PC-9 (cell line): ENCODE measurements at regions of chr10 and their contacts with region 1.

Region 1: GRCh38 chr10:98446661-98447221 is at the start of gene HPS1:
- DNase-seq: peak in 1 of 2 experiments; percentile 57
- H3K4me3 ChIP-seq: peak within 1 kb of the TSS; percentile 82
- H3K27ac ChIP-seq: peak within 1 kb of the TSS; percentile 47
- H3K4me1 ChIP-seq: 0 out of 2 replicates have a peak, but pooled peaks cover 4% of the 10 kb centered on the region
- H3K27me3 ChIP-seq: no peaks in the 10 kb centered on the region
- CTCF ChIP-seq: no peak
- total RNA-seq, gene HPS1: 43.2 and 47.0 TPM in 2 replicates

Region 2: DNA sequence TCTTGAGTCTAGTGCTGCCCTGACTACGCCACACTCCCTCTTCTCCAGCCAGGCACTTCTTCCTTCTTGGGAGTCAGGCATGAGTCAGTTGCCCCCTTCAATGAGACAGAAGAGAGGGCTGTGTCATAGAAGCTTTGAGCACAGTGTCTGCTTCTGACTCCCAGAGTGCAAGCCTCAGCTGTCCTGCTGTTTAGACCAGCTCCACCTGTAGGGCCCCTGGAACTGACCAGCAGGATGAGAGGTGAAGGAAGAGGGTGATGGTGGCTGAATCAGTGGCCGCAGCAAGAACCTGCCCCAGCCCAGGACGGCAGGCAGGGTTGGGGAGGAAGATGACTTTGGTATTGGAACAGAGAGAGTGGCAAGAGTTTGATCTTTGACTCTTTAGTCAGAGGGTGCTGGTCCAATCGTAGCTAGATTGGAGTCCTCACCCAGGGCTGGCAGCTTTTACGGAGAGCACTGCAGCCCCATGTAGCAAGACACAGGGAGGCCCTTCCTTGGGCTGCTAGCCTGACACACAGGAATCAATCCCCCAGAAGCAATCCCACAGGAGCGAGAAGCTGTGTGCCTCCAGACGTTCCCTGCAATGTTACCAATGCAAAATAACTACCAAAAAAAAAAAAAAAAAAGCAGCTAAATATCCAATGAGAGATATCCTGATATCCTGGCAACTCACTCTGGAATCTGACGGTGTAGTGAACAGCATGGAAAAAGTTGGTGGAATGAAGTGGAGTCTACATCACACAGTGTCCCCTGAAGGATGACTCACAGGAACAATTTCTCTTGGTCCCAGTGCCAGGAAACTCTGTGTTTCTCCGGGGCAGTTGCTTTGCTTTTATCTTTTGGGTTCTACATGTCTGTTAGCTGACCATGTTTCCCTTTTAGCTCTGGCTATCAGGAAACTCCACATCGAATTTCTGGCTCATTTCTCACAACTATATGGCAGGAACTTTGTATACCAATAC is 850.4 kb before region 1 on chr10:
- CTCF ChIA-PET with region 1: no interaction called
- POLR2A ChIA-PET with region 1: no interaction called
- intact Hi-C with region 1: no loop called
- DNase-seq: peak; percentile 32 to 46
- H3K4me3 ChIP-seq: no peak overlapping the region
- H3K27ac ChIP-seq: peak overlapping the region; percentile 67
- H3K4me1 ChIP-seq: peaks cover 28% of the 10 kb centered on the region
- H3K27me3 ChIP-seq: no peaks in the 10 kb centered on the region
- CTCF ChIP-seq: no peak

Region 3: DNA sequence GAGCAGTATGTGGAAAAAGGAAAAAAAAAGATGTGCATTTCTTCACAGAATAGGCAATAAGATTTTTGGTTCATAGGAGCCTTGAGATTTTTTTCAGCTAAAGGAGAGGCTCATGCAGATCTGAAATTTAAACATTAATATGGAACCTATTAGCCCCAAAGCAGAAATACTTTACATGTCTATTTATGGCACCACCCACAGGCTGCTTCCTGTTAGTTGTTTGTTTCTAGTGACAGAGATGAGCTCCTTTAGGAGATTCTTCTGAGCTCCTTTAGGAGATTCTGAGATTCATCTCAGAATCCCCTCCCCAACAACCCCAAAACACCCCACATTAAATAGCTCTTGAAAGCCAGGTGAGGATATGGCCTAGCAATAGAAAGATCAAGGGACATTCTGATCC is 27.9 kb after region 1 on chr10:
- CTCF ChIA-PET with region 1: no interaction called
- POLR2A ChIA-PET with region 1: no interaction called
- intact Hi-C with region 1: no loop called
- DNase-seq: no peak
- H3K4me3 ChIP-seq: no peak overlapping the region
- H3K27ac ChIP-seq: no peak overlapping the region
- H3K4me1 ChIP-seq: no peaks in the 10 kb centered on the region
- H3K27me3 ChIP-seq: no peaks in the 10 kb centered on the region
- CTCF ChIP-seq: no peak

Region 4: DNA sequence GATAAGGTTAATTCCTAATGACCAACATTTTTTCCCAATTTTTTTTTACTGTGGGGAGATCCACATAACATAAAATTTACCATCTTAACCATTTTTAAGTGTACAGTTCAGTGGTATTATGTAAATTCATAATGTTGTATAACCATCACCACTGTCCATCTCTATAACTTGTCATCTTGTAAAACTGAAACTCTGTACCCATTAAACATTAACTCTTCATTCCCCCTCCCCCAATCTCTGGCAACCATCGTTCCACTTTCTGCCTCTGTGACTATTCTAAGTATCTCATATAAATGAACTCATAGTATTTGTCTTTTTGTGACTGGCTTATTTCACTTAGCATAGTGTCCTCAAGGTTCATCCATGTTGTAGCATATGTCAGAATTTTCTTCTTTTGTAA is 46.0 kb after region 1 on chr10:
- CTCF ChIA-PET with region 1: no interaction called
- POLR2A ChIA-PET with region 1: no interaction called
- intact Hi-C with region 1: no loop called
- DNase-seq: no peak
- H3K4me3 ChIP-seq: no peak overlapping the region
- H3K27ac ChIP-seq: no peak overlapping the region
- H3K4me1 ChIP-seq: no peaks in the 10 kb centered on the region
- H3K27me3 ChIP-seq: no peaks in the 10 kb centered on the region
- CTCF ChIP-seq: no peak

Region 5: DNA sequence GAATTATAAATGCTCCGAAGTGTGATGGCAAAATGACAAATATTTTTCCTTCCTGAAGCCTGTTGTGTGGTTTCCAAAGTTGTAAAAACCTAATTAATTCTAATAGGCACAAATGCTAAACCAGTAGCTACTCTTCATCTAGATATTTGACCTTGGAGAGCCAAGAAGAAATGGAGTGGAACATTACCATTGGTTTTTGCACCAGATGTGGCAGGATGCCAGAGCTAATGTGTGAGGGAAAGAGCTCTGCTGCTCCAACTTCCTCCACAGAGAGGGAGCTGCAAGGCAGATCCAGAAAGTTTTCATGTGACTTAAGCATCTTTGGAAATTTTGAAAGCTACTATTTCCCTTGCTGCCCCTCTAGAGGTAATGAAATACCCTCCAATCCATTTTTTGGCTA is 65.1 kb after region 1 on chr10:
- CTCF ChIA-PET with region 1: no interaction called
- POLR2A ChIA-PET with region 1: no interaction called
- intact Hi-C with region 1: no loop called
- DNase-seq: no peak
- H3K4me3 ChIP-seq: no peak overlapping the region
- H3K27ac ChIP-seq: no peak overlapping the region
- H3K4me1 ChIP-seq: no peaks in the 10 kb centered on the region
- H3K27me3 ChIP-seq: peaks cover 8% of the 10 kb centered on the region
- CTCF ChIP-seq: no peak

Region 6: DNA sequence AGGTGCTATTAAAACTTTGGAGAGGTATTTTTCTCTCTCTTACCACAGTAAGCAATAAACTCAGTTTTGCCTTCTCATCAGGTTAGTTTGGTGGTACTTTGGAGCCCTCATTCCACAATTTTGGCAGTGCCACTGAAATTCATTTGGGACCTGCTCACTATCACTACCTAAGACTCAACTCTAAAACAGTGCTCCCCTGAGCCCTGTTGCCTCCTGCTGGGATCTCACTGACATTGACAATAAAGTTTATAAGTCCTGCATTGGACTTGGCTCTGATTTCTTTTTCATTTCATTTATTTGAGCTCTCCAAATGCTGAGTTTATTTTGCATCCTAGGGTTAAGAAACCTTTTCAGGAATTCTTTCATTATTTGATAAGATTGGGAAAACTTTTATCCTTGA is 130.8 kb after region 1 on chr10:
- CTCF ChIA-PET with region 1: no interaction called
- POLR2A ChIA-PET with region 1: interaction called, 13 read pairs
- intact Hi-C with region 1: no loop called
- DNase-seq: no peak
- H3K4me3 ChIP-seq: no peak overlapping the region
- H3K27ac ChIP-seq: no peak overlapping the region
- H3K4me1 ChIP-seq: no peaks in the 10 kb centered on the region
- H3K27me3 ChIP-seq: peaks cover 4% of the 10 kb centered on the region; the same call in 1 of the 2 replicates
- CTCF ChIP-seq: no peak